ENCODE measurements at regions of chr2 and their contacts with region 1.

Region 1: DNA sequence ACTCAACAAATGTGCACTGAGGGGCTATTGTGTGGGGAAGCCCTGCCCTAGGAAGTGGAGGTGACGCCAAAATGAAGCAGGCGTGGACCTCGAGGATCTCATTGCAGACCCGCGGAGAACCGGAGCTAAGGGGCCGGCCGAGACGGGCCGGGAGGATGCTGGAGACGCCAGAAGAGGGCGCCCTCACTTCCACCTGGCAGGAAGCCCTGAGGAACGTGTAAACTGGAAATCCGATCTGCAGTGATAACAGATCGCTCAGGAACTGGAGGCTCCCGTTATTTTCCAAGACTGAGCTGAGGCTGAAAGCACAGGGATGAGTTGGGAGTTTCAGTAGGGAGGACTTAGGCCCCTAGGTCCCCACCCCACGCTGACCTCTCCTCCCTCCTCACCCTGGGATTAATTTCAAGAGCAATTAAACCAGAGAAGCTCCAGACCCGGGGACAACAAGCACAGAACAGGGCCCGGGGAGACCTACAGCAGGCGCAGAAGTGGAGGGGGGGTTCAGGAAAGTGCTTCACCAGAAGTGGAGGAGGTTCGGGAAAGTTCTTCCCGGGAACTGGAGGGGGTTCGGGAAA is 7.7 kb upstream of the COL6A3 start:
- DNase-seq: peak; percentile 77
- H3K4me3 ChIP-seq: no peak overlapping the region
- H3K27ac ChIP-seq: peak overlapping the region; percentile 61
- H3K27me3 ChIP-seq: no peaks in the 10 kb centered on the region
- CTCF ChIP-seq: peak; percentile 90

Region 2: GRCh38 chr2:237403024-237403882 is 18.4 kb before region 1 on chr2:
- CTCF ChIA-PET with region 1: interaction called, 48 read pairs
- POLR2A ChIA-PET with region 1: no interaction called
- DNase-seq: no peak
- H3K4me3 ChIP-seq: peak overlapping the region; percentile 20
- H3K27ac ChIP-seq: peak overlapping the region; percentile 83
- H3K27me3 ChIP-seq: no peaks in the 10 kb centered on the region
- CTCF ChIP-seq: no peak

Region 3: GRCh38 chr2:237441605-237442274 is 20.1 kb after region 1 on chr2:
- CTCF ChIA-PET with region 1: interaction called, 53 read pairs
- POLR2A ChIA-PET with region 1: interaction called, 4 read pairs
- DNase-seq: peak; percentile 66
- H3K4me3 ChIP-seq: no peak overlapping the region
- H3K27ac ChIP-seq: no peak overlapping the region
- H3K27me3 ChIP-seq: no peaks in the 10 kb centered on the region
- CTCF ChIP-seq: no peak

Region 4: GRCh38 chr2:237465515-237466218 is 44.0 kb after region 1 on chr2:
- CTCF ChIA-PET with region 1: interaction called, 33 read pairs
- POLR2A ChIA-PET with region 1: interaction called, 5 read pairs
- DNase-seq: peak; percentile 93
- H3K4me3 ChIP-seq: no peak overlapping the region
- H3K27ac ChIP-seq: peak overlapping the region; percentile 98
- H3K27me3 ChIP-seq: no peaks in the 10 kb centered on the region
- CTCF ChIP-seq: no peak

Region 5: GRCh38 chr2:237483040-237483721 is 61.6 kb after region 1 on chr2:
- CTCF ChIA-PET with region 1: interaction called, 75 read pairs
- POLR2A ChIA-PET with region 1: no interaction called
- DNase-seq: peak; percentile 64
- H3K4me3 ChIP-seq: no peak overlapping the region
- H3K27ac ChIP-seq: peak overlapping the region; percentile 71
- H3K27me3 ChIP-seq: no peaks in the 10 kb centered on the region
- CTCF ChIP-seq: peak; percentile 73